Naive thymus-derived CD4-positive, alpha-beta T cell (primary cell): ENCODE measurements at regions of chr12 and their contacts with region 1.

Region 1: DNA sequence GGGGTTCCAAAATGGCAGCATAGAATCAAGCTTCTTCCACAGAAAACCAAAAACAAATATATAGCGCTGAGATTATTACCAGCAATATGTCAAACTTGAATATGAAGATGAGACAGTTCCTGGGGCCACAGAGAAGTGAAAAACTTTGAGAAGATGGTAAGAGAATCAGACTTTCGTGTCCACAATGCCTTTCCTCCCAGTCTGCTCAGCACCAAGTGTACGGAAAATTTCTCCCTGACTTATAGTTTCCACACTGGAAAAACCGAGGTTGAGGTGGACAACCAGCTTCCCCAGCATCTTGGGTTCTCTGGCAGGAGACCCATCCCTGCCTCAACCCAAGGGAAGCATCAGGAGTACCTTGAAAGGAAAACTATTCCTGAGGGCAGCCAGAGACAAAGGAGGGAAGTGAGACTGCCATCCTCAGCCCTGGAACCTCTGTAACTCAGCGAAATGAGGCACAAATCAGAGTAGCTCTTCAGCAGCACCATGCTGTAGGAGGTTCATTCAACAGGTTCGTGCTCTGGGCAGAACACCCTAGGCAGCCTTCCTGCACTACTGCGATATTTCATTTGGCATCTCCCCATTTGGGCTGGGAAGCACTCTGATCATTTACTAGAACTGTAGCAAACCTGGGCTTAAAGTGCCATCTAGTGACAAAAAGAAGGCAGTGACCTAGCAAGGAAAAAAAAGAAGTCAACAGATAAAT is 52.4 kb upstream of the CAPRIN2 start:
- DNase-seq: peak in 7 of 9 donors; percentile 20 to 61 (median 48)
- ATAC-seq: peak; percentile 63
- H3K4me3 ChIP-seq: no peak overlapping the region
- H3K4me3 Mint-ChIP-seq: no peak overlapping the region
- H3K27ac ChIP-seq: no peak overlapping the region
- H3K27ac Mint-ChIP-seq: no peak overlapping the region
- H3K4me1 ChIP-seq: no peaks in the 10 kb centered on the region
- H3K4me1 Mint-ChIP-seq: no peaks in the 10 kb centered on the region
- H3K27me3 ChIP-seq: no peaks in the 10 kb centered on the region
- H3K27me3 Mint-ChIP-seq: peaks cover 17 to 29% (median 23%) of the 10 kb centered on the region in 5 donors

Region 2: GRCh38 chr12:29073628-29074239 is 1733.4 kb before region 1 on chr12:
- CTCF ChIA-PET with region 1: no interaction called
- POLR2A ChIA-PET with region 1: no interaction called
- intact Hi-C with region 1: loop called (anchors 2 to 5 kb)
- DNase-seq: peak in 6 of 9 donors; percentile 7 to 47 (median 34)
- ATAC-seq: peak; percentile 73
- H3K4me3 ChIP-seq: no peak overlapping the region
- H3K4me3 Mint-ChIP-seq: no peak overlapping the region
- H3K27ac ChIP-seq: no peak overlapping the region
- H3K27ac Mint-ChIP-seq: peak overlapping the region in 2 of 9 donors; percentile 26 to 65
- H3K4me1 ChIP-seq: no peaks in the 10 kb centered on the region
- H3K4me1 Mint-ChIP-seq: no peaks in the 10 kb centered on the region
- H3K27me3 ChIP-seq: no peaks in the 10 kb centered on the region
- H3K27me3 Mint-ChIP-seq: peaks cover 12 to 45% (median 23%) of the 10 kb centered on the region in 5 donors

Region 3: GRCh38 chr12:29320295-29321090 is 1486.6 kb before region 1 on chr12:
- CTCF ChIA-PET with region 1: no interaction called
- POLR2A ChIA-PET with region 1: no interaction called
- intact Hi-C with region 1: no loop called
- DNase-seq: no peak
- ATAC-seq: no peak
- H3K4me3 ChIP-seq: no peak overlapping the region
- H3K4me3 Mint-ChIP-seq: no peak overlapping the region
- H3K27ac ChIP-seq: no peak overlapping the region
- H3K27ac Mint-ChIP-seq: no peak overlapping the region
- H3K4me1 ChIP-seq: no peaks in the 10 kb centered on the region
- H3K4me1 Mint-ChIP-seq: peaks cover 2 to 10% (median 8%) of the 10 kb centered on the region in 7 donors
- H3K27me3 ChIP-seq: no peaks in the 10 kb centered on the region
- H3K27me3 Mint-ChIP-seq: no peaks in the 10 kb centered on the region

Region 4: DNA sequence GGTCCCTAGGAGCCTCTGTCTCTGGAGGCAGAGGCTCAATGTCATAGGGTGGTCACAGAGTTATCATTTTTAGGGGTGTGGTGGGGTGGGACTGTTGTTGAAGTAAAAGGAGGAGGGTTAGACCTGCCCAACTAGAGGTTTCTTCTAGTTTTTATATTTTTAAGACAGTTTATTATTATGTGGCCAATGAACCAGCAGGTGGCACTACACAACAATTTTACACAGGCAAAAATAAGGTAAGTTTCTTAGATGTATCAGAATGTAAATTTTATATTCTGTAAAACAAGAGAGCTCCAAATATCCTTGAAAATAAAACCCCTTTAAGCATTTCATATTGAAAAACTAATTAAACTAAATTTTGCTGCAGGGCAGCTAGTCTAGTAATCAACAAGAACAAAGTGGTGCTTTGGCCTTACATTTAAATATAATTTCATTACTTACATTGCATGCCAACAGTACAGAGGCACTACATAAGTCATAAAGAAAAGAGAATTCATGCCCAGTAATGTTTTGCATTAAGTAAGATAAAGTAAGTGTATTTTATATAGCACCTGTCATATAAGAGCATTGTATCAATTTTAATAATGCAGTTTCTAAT is 1287.5 kb before region 1 on chr12:
- CTCF ChIA-PET with region 1: interaction called, 13 read pairs
- POLR2A ChIA-PET with region 1: no interaction called
- intact Hi-C with region 1: loop called (anchors 1 kb)
- DNase-seq: peak in 5 of 9 donors; percentile 10 to 34 (median 22)
- ATAC-seq: no peak
- H3K4me3 ChIP-seq: no peak overlapping the region
- H3K4me3 Mint-ChIP-seq: no peak overlapping the region
- H3K27ac ChIP-seq: no peak overlapping the region
- H3K27ac Mint-ChIP-seq: no peak overlapping the region
- H3K4me1 ChIP-seq: no peaks in the 10 kb centered on the region
- H3K4me1 Mint-ChIP-seq: no peaks in the 10 kb centered on the region
- H3K27me3 ChIP-seq: no peaks in the 10 kb centered on the region
- H3K27me3 Mint-ChIP-seq: peaks cover 2 to 11% (median 8%) of the 10 kb centered on the region in 5 donors

Region 5: DNA sequence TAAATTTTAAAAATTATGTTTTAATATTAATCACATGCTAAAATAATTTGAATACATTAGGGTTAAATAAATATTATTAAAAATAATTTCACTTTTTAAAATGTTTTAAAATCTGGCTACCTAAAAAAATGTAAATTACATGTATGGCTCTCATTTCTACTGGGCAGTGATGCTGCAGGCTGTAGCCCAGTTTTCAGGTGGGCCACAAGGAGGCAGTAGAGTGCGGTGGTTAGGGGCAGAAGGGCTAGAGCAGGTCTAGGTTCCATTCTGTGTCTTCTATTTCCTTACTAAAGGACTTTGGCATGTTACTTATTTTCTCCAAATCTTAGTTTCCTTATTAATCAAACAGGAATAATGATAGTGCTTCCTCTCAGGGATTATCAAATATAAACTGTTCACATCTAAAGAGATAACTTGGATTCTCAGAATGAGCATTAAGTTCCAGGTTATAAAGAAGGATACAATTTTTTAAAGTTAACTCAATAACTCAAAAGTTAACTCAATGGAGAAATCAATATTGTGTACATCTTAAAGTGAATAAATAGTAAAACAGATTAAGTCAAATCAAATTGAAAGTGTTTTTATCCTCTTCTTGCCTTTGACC is 1254.7 kb before region 1 on chr12:
- CTCF ChIA-PET with region 1: interaction called, 6 read pairs
- POLR2A ChIA-PET with region 1: no interaction called
- intact Hi-C with region 1: loop called (anchors 1 kb)
- DNase-seq: peak in 8 of 9 donors; percentile 20 to 60 (median 44)
- ATAC-seq: peak; percentile 85
- H3K4me3 ChIP-seq: no peak overlapping the region
- H3K4me3 Mint-ChIP-seq: no peak overlapping the region
- H3K27ac ChIP-seq: no peak overlapping the region
- H3K27ac Mint-ChIP-seq: no peak overlapping the region
- H3K4me1 ChIP-seq: no peaks in the 10 kb centered on the region
- H3K4me1 Mint-ChIP-seq: no peaks in the 10 kb centered on the region
- H3K27me3 ChIP-seq: no peaks in the 10 kb centered on the region
- H3K27me3 Mint-ChIP-seq: peaks cover 0 to 15% (median 13%) of the 10 kb centered on the region in 5 donors

Region 6: GRCh38 chr12:30695199-30696103 is 111.7 kb before region 1 on chr12 and contains the start of gene IPO8:
- CTCF ChIA-PET with region 1: no interaction called
- POLR2A ChIA-PET with region 1: no interaction called
- intact Hi-C with region 1: loop called in 1 of 2 experiments (anchors 5 kb)
- DNase-seq: peak; percentile 61 to 83 (median 76)
- ATAC-seq: peak; percentile 97
- H3K4me3 ChIP-seq: peak within 1 kb of the TSS; percentile 94
- H3K4me3 Mint-ChIP-seq: peak within 1 kb of the TSS; percentile 93 to 100 (median 96)
- H3K27ac ChIP-seq: peak within 1 kb of the TSS; percentile 78
- H3K27ac Mint-ChIP-seq: peak within 1 kb of the TSS; percentile 91 to 98 (median 94)
- H3K4me1 ChIP-seq: peaks cover 22 to 28% of the 10 kb centered on the region in 2 donors
- H3K4me1 Mint-ChIP-seq: peaks cover 27 to 52% (median 45%) of the 10 kb centered on the region in 7 donors
- H3K27me3 ChIP-seq: no peaks in the 10 kb centered on the region
- H3K27me3 Mint-ChIP-seq: peaks cover 0 to 6% (median 4%) of the 10 kb centered on the region in 5 donors
- total RNA-seq, gene IPO8: 30.4 to 59.2 (median 44.4) TPM

Region 7: DNA sequence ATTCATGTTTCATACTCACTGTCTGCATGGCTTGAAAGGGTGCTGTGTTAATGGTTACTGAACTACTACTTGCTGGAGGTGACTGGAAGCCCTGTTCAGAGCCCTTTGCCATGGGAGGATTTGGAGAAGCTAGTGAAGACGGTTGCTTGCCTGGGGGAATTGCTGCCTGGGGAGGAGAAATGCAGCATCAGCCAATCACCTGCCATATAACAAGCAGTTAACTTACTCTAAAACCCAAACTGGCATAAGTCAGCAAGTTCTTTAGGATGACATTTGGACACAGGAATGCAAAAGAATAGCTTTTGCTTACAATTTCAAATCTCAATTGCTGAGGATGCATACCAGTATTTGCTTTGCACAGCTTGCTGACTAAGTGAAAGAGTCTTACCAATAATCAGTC is 88.1 kb before region 1 on chr12:
- CTCF ChIA-PET with region 1: no interaction called
- POLR2A ChIA-PET with region 1: no interaction called
- intact Hi-C with region 1: loop called in 1 of 2 experiments (anchors 1 kb)
- DNase-seq: no peak
- ATAC-seq: no peak
- H3K4me3 ChIP-seq: no peak overlapping the region
- H3K4me3 Mint-ChIP-seq: no peak overlapping the region
- H3K27ac ChIP-seq: no peak overlapping the region
- H3K27ac Mint-ChIP-seq: no peak overlapping the region
- H3K4me1 ChIP-seq: no peaks in the 10 kb centered on the region
- H3K4me1 Mint-ChIP-seq: no peaks in the 10 kb centered on the region
- H3K27me3 ChIP-seq: no peaks in the 10 kb centered on the region
- H3K27me3 Mint-ChIP-seq: no peaks in the 10 kb centered on the region

Region 8: GRCh38 chr12:30882706-30883105 is 75.6 kb after region 1 on chr12:
- CTCF ChIA-PET with region 1: no interaction called
- POLR2A ChIA-PET with region 1: no interaction called
- intact Hi-C with region 1: no loop called
- DNase-seq: no peak
- ATAC-seq: no peak
- H3K4me3 ChIP-seq: no peak overlapping the region
- H3K4me3 Mint-ChIP-seq: no peak overlapping the region
- H3K27ac ChIP-seq: no peak overlapping the region
- H3K27ac Mint-ChIP-seq: no peak overlapping the region
- H3K4me1 ChIP-seq: no peaks in the 10 kb centered on the region
- H3K4me1 Mint-ChIP-seq: no peaks in the 10 kb centered on the region
- H3K27me3 ChIP-seq: no peaks in the 10 kb centered on the region
- H3K27me3 Mint-ChIP-seq: peaks cover 8 to 20% (median 14%) of the 10 kb centered on the region in 5 donors